Heart left ventricle (tissue), 16 donors: ENCODE measurements at regions of chr1 and their contacts with region 1.

Region 1: DNA sequence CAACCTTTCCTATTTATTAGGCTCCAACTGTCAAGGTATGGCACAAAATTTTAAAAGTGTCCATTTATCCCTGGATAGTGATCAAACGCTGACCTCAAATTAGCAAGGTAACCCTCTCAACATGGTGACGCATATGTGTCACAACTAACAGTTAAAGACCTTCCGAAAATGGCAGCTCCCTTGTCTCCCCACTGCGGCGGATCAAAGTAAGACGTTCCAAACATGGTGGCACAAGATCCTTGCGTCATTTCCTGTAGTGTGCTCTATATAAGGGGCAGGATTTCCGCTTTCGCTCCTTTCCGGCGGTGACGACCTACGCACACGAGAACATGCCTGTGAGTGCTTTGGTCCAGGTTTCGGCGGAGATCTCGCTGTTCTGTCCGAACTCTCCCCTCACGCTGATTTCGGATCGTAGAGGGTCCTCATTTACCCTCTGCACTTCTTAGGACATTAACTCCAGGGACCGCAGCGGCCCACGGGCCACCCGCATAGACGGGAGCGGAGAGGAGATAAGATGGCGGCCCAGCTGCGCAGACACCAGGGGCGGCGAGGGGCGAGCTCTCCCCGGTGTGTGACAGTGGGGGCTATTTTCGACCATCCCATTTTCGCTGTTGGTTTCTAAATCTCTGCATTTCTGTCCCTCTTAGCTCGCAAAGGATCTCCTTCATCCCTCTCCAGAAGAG is at the start of gene RPS27:
- DNase-seq: peak; percentile 84 to 95 (median 94)
- ATAC-seq: peak; percentile 76 to 90 (median 88)
- H3K4me3 ChIP-seq: peak within 1 kb of the TSS; percentile 48 to 93 (median 77)
- H3K27ac ChIP-seq: peak within 1 kb of the TSS; percentile 87 to 98 (median 94)
- H3K4me1 ChIP-seq: peaks cover 5 to 49% (median 31%) of the 10 kb centered on the region in 12 donors
- H3K27me3 ChIP-seq: no peaks in the 10 kb centered on the region
- CTCF ChIP-seq: peak in 1 of 12 donors; percentile 16
- POLR2A ChIP-seq: peak; percentile 66 to 94
- total RNA-seq, gene RPS27: 537 to 1,013 (median 772) TPM

Region 2: GRCh38 chr1:153532769-153533599 is 457.6 kb before region 1 on chr1:
- intact Hi-C with region 1: loop called in 1 of 10 experiments (anchors 10 kb)
- DNase-seq: peak; percentile 83 to 91 (median 84)
- ATAC-seq: peak; percentile 35 to 70 (median 52)
- H3K4me3 ChIP-seq: peak overlapping the region in 10 of 12 donors; percentile 14 to 97 (median 90)
- H3K27ac ChIP-seq: peak overlapping the region in 11 of 12 donors; percentile 3 to 100 (median 98)
- H3K4me1 ChIP-seq: peaks cover 0 to 54% (median 28%) of the 10 kb centered on the region in 12 donors
- H3K27me3 ChIP-seq: no peaks in the 10 kb centered on the region
- CTCF ChIP-seq: peak; percentile 63 to 89 (median 80)
- POLR2A ChIP-seq: no peak

Region 3: GRCh38 chr1:153677718-153678505 is 312.7 kb before region 1 on chr1:
- intact Hi-C with region 1: loop called (anchors 1 to 10 kb)
- DNase-seq: peak in 4 of 5 donors; percentile 50 to 71 (median 52)
- ATAC-seq: peak; percentile 44 to 78 (median 67)
- H3K4me3 ChIP-seq: peak overlapping the region; percentile 35 to 76 (median 60)
- H3K27ac ChIP-seq: peak overlapping the region in 11 of 12 donors; percentile 3 to 83 (median 68)
- H3K4me1 ChIP-seq: peaks cover 0 to 26% (median 19%) of the 10 kb centered on the region in 12 donors
- H3K27me3 ChIP-seq: peaks cover 0 to 28% (median 7%) of the 10 kb centered on the region in 9 donors
- CTCF ChIP-seq: peak; percentile 82 to 96 (median 93)
- POLR2A ChIP-seq: no peak

Region 4: DNA sequence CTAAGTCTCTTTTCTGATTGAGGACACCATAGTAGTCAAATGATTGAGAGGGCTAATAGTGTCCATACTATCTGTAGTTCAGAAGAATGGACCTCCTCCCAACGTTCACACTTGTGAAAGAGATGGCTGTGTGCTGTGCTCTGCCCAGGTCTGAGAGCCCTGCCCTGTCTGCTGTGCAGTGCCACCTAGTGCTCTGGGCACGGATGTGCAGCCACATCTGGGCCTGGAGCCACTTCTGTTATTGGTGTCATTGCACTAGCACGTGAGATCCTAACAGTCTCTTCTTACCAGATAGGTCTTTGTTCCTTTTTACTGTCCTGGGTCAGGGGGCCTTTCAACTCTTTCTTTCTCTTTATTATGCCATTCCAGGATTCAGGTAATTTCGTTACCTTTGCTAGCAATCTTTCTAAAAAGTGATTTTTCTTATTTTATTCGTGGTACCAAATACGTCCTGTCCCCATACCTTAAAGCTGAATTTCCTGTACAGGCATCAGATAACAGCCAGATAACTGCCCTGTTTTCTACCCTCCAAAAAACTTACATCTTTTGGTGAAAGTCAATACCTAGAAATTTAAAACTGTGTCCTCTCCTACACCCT is 241.1 kb before region 1 on chr1:
- intact Hi-C with region 1: no loop called
- DNase-seq: peak; percentile 81 to 91 (median 89)
- ATAC-seq: peak; percentile 87 to 94 (median 94)
- H3K4me3 ChIP-seq: no peak overlapping the region
- H3K27ac ChIP-seq: peak overlapping the region; percentile 33 to 78 (median 71)
- H3K4me1 ChIP-seq: peaks cover 14 to 62% (median 39%) of the 10 kb centered on the region in 12 donors
- H3K27me3 ChIP-seq: no peaks in the 10 kb centered on the region
- CTCF ChIP-seq: peak; percentile 89 to 98 (median 94)
- POLR2A ChIP-seq: no peak

Region 5: DNA sequence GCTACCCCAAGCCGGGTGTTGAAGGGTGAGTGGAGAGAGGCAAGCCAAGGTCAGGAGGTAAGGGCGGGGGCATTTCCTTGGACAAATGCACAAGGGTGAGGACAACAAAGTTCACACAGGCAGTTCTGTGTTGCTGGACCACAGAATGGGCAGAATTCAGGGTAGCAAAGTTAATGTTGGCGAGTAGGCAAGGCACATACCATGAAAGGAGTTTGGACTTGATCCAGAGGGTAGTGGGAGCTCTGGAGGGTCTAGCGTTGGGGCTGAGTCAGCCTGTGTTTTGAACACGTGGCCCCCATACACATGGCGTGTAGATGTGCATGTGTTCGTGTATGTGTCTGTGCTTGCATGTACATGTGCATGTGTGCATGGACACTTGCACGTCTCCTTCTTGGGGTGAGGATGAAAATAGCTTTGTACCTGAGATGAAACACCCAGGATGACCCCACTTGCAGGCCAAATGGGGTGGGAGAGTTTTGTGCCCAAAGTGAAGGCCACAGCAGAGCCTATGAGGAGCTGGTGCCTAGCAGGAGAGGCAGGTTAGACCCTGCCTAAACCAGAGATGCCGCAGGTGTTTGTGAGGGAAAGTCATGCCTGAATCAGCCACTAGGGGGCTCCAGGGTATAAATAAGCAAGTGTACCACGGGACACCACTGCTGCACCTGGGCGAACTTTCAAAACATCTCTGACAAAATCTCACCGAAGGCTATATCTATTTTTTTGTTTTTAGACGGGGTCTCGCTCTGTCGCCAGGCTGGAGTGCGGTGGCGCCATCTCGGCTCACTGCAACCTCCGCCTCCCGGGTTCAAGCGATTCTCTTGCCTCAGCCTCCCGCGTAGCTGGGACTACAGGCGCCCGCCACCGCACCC is 193.6 kb before region 1 on chr1:
- intact Hi-C with region 1: loop called (anchors 1 to 5 kb)
- DNase-seq: peak in 4 of 5 donors; percentile 76 to 83 (median 78)
- ATAC-seq: peak; percentile 9 to 76 (median 61)
- H3K4me3 ChIP-seq: no peak overlapping the region
- H3K27ac ChIP-seq: no peak overlapping the region
- H3K4me1 ChIP-seq: peaks cover 0 to 9% (median 0%) of the 10 kb centered on the region in 12 donors
- H3K27me3 ChIP-seq: no peaks in the 10 kb centered on the region
- CTCF ChIP-seq: peak; percentile 89 to 96 (median 92)
- POLR2A ChIP-seq: no peak

Region 6: DNA sequence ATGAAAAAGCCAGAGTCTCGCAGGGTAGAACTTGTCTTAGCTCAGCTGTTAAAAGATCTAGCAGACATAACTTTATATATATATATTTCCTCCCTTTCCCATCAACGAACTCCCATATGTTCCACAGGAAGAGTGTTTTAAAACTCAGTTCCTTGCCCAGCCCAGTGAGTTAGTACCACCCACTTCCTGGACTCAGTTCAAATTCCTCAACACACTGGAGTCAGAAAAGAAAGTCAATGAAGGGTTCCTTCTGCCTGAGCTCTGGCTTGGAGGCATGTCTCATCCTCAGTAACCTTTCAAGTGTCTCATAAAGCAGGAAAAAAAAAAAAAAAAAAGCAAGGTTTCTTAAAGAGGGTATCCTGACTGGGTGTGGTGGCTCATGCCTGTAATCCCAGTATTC is 185.7 kb after region 1 on chr1:
- intact Hi-C with region 1: loop called in 3 of 10 experiments (anchors 5 to 10 kb)
- DNase-seq: peak in 2 of 5 donors; percentile 37 to 42
- ATAC-seq: peak in 3 of 4 donors; percentile 60 to 82 (median 74)
- H3K4me3 ChIP-seq: peak overlapping the region in 1 of 12 donors; percentile 7
- H3K27ac ChIP-seq: peak overlapping the region in 7 of 12 donors; percentile 27 to 98 (median 47)
- H3K4me1 ChIP-seq: peaks cover 8 to 61% (median 55%) of the 10 kb centered on the region in 12 donors
- H3K27me3 ChIP-seq: no peaks in the 10 kb centered on the region
- CTCF ChIP-seq: no peak
- POLR2A ChIP-seq: no peak

Region 7: GRCh38 chr1:154220071-154220969 is 229.7 kb after region 1 on chr1 and contains the start of gene UBAP2L:
- intact Hi-C with region 1: loop called in 1 of 10 experiments (anchors 2 kb)
- DNase-seq: peak; percentile 99 to 100 (median 99)
- ATAC-seq: peak; percentile 97 to 99 (median 98)
- H3K4me3 ChIP-seq: peak within 1 kb of the TSS; percentile 65 to 97 (median 82)
- H3K27ac ChIP-seq: peak within 1 kb of the TSS; percentile 95 to 100 (median 98)
- H3K4me1 ChIP-seq: peaks cover 7 to 61% (median 51%) of the 10 kb centered on the region in 12 donors
- H3K27me3 ChIP-seq: no peaks in the 10 kb centered on the region
- CTCF ChIP-seq: peak in 1 of 12 donors; percentile 3
- POLR2A ChIP-seq: peak; percentile 19 to 61
- total RNA-seq, gene UBAP2L: 57.4 to 142 (median 100) TPM